Caco-2 (cell line): ENCODE measurements at regions of chr7 and their contacts with region 1.

Region 1: DNA sequence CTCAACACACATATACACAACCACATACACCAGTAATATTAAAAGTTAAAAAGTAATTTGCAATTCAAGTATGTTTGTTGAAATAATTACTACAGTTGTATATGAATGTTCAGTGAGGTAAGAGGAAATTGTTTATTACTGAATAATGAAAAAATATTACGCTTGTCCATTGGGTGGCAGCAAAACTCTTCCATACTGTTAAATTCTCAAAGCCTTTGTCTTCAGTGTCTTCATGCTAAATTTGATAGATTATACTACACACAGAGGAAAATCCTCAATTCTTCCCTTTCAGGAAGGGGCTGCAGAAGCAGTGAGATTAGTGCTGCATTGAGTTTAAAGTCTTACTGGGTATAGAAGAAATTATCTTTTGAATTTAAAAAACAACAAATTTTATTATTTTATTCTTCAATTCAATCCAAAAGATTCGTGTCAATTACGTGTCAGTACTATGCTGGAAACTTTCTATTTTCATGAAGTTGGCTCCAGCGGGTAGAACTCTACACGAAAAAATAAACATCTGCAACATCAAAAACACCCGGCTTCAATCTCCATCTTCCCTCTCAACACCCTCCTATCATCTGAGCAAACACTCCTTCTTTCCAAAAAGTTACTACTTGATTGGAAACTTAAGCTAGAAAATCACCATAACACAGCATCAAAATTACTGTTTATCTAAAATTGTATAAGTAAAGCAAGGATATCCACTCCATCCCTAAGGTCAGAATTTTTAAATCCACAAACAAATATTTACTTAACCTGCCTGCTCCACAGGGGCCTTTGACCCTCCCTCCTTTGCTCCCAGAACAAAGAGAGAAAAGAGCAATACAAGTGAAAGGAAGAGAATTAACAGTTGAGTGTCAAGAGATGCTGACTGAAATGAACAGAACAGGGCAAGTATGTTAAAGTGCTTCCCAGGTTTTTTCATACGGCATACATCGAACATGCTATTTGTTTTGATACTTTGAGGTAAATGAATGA is 37.0 kb upstream of the TES start:
- DNase-seq: peak in 1 of 2 experiments; percentile 63
- H3K4me3 ChIP-seq: no peak overlapping the region
- H3K4me3 Mint-ChIP-seq: peak overlapping the region; percentile 6
- H3K27ac Mint-ChIP-seq: no peak overlapping the region
- H3K4me1 ChIP-seq: peaks cover 43% of the 10 kb centered on the region
- H3K4me1 Mint-ChIP-seq: peaks cover 37% of the 10 kb centered on the region
- H3K27me3 ChIP-seq: no peaks in the 10 kb centered on the region
- H3K27me3 Mint-ChIP-seq: no peaks in the 10 kb centered on the region
- CTCF ChIP-seq: peak; percentile 38 to 63

Region 2: GRCh38 chr7:116075351-116076145 is 97.8 kb before region 1 on chr7:
- CTCF ChIA-PET with region 1: no interaction called
- POLR2A ChIA-PET with region 1: no interaction called
- intact Hi-C with region 1: no loop called
- DNase-seq: no peak
- H3K4me3 ChIP-seq: no peak overlapping the region
- H3K4me3 Mint-ChIP-seq: no peak overlapping the region
- H3K27ac Mint-ChIP-seq: no peak overlapping the region
- H3K4me1 ChIP-seq: no peaks in the 10 kb centered on the region
- H3K4me1 Mint-ChIP-seq: no peaks in the 10 kb centered on the region
- H3K27me3 ChIP-seq: no peaks in the 10 kb centered on the region
- H3K27me3 Mint-ChIP-seq: no peaks in the 10 kb centered on the region
- CTCF ChIP-seq: no peak

Region 3: GRCh38 chr7:116138202-116138801 is 35.0 kb before region 1 on chr7:
- CTCF ChIA-PET with region 1: no interaction called
- POLR2A ChIA-PET with region 1: no interaction called
- intact Hi-C with region 1: loop called (anchors 1 kb)
- DNase-seq: peak; percentile 44 to 69
- H3K4me3 ChIP-seq: no peak overlapping the region
- H3K4me3 Mint-ChIP-seq: no peak overlapping the region
- H3K27ac Mint-ChIP-seq: no peak overlapping the region
- H3K4me1 ChIP-seq: peaks cover 14% of the 10 kb centered on the region; the same call in 1 of the 2 replicates
- H3K4me1 Mint-ChIP-seq: peaks cover 17% of the 10 kb centered on the region
- H3K27me3 ChIP-seq: no peaks in the 10 kb centered on the region
- H3K27me3 Mint-ChIP-seq: no peaks in the 10 kb centered on the region
- CTCF ChIP-seq: peak; percentile 75 to 80

Region 4: DNA sequence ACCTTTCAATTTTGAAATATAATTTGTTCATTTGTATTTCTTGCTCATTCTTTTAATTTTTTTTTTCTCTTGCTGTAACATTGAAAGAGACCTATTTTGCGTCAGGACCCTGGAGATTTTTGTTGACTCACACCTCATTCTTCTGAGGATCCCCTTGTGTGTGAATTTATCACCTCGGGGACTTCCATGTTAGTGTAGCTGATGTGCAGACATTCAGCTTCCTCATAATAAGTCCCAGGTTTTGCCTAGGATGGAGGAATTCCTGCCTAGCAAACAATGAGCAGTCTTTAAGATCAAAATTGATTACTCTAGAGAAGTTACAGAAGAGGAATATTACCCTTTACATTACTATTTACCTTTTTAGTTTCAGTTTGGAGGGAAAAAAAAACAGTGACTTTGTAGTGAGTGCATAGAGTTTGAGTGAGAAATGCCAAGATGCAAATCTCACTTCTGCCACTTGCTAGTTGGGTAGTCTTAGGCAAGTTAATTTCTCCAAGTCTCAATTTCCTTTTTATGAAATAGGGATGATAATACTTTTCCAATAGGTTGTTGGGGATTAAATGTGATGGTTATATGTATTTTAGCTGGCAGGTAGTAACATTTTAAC is 51.3 kb after region 1 on chr7:
- CTCF ChIA-PET with region 1: no interaction called
- POLR2A ChIA-PET with region 1: no interaction called
- intact Hi-C with region 1: no loop called
- DNase-seq: no peak
- H3K4me3 ChIP-seq: no peak overlapping the region
- H3K4me3 Mint-ChIP-seq: no peak overlapping the region
- H3K27ac Mint-ChIP-seq: no peak overlapping the region
- H3K4me1 ChIP-seq: no peaks in the 10 kb centered on the region; the same call in 1 of the 2 replicates
- H3K4me1 Mint-ChIP-seq: peaks cover 9% of the 10 kb centered on the region
- H3K27me3 ChIP-seq: no peaks in the 10 kb centered on the region
- H3K27me3 Mint-ChIP-seq: no peaks in the 10 kb centered on the region
- CTCF ChIP-seq: no peak

Region 5: GRCh38 chr7:116258734-116259133 is 85.4 kb after region 1 on chr7:
- CTCF ChIA-PET with region 1: no interaction called
- POLR2A ChIA-PET with region 1: no interaction called
- intact Hi-C with region 1: loop called (anchors 2 kb)
- DNase-seq: peak in 1 of 2 experiments; percentile 55
- H3K4me3 ChIP-seq: no peak overlapping the region
- H3K4me3 Mint-ChIP-seq: no peak overlapping the region
- H3K27ac Mint-ChIP-seq: no peak overlapping the region
- H3K4me1 ChIP-seq: peaks cover 12% of the 10 kb centered on the region
- H3K4me1 Mint-ChIP-seq: peaks cover 17% of the 10 kb centered on the region
- H3K27me3 ChIP-seq: no peaks in the 10 kb centered on the region
- H3K27me3 Mint-ChIP-seq: no peaks in the 10 kb centered on the region
- CTCF ChIP-seq: peak; percentile 72 to 83

Region 6: DNA sequence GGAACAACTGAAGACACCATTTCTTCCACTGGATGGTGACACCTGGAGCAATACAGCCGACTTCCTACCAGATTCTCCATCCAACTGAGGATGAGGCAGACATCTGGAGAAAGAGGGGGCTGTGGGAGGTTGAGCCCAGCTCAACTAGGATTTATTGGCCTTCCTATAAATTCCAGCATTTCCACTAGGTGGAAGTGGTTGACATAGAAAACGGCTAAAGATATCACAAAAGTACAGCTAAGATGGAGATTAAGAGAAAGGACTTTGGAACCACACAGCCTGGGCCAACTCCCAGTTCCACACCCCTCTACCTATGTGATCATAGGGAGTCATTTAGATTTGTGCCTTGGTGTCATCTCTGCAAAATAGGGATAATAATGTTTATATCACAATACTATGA is 264.9 kb after region 1 on chr7:
- CTCF ChIA-PET with region 1: no interaction called
- POLR2A ChIA-PET with region 1: no interaction called
- intact Hi-C with region 1: loop called (anchors 10 kb)
- DNase-seq: peak; percentile 42 to 47
- H3K4me3 ChIP-seq: no peak overlapping the region
- H3K4me3 Mint-ChIP-seq: no peak overlapping the region
- H3K27ac Mint-ChIP-seq: no peak overlapping the region
- H3K4me1 ChIP-seq: peaks cover 24% of the 10 kb centered on the region
- H3K4me1 Mint-ChIP-seq: peaks cover 4% of the 10 kb centered on the region
- H3K27me3 ChIP-seq: no peaks in the 10 kb centered on the region
- H3K27me3 Mint-ChIP-seq: no peaks in the 10 kb centered on the region
- CTCF ChIP-seq: peak; percentile 19 to 41

Region 7: GRCh38 chr7:116560021-116560970 is 387.0 kb after region 1 on chr7:
- CTCF ChIA-PET with region 1: no interaction called
- POLR2A ChIA-PET with region 1: no interaction called
- intact Hi-C with region 1: no loop called
- DNase-seq: no peak
- H3K4me3 ChIP-seq: no peak overlapping the region
- H3K4me3 Mint-ChIP-seq: no peak overlapping the region
- H3K27ac Mint-ChIP-seq: no peak overlapping the region
- H3K4me1 ChIP-seq: no peaks in the 10 kb centered on the region
- H3K4me1 Mint-ChIP-seq: no peaks in the 10 kb centered on the region
- H3K27me3 ChIP-seq: no peaks in the 10 kb centered on the region
- H3K27me3 Mint-ChIP-seq: peaks cover 7% of the 10 kb centered on the region
- CTCF ChIP-seq: no peak

Region 8: GRCh38 chr7:116588641-116589594 is 415.6 kb after region 1 on chr7:
- CTCF ChIA-PET with region 1: no interaction called
- POLR2A ChIA-PET with region 1: no interaction called
- intact Hi-C with region 1: loop called (anchors 1 kb)
- DNase-seq: peak in 1 of 2 experiments; percentile 57
- H3K4me3 ChIP-seq: no peak overlapping the region
- H3K4me3 Mint-ChIP-seq: no peak overlapping the region
- H3K27ac Mint-ChIP-seq: peak overlapping the region; percentile 30
- H3K4me1 ChIP-seq: peaks cover 17% of the 10 kb centered on the region; the same call in 1 of the 2 replicates
- H3K4me1 Mint-ChIP-seq: peaks cover 22% of the 10 kb centered on the region
- H3K27me3 ChIP-seq: no peaks in the 10 kb centered on the region
- H3K27me3 Mint-ChIP-seq: no peaks in the 10 kb centered on the region
- CTCF ChIP-seq: peak; percentile 44 to 69

Region 9: GRCh38 chr7:117385340-117386109 is 1212.2 kb after region 1 on chr7:
- CTCF ChIA-PET with region 1: no interaction called
- POLR2A ChIA-PET with region 1: no interaction called
- intact Hi-C with region 1: loop called (anchors 10 kb)
- DNase-seq: no peak
- H3K4me3 ChIP-seq: no peak overlapping the region
- H3K4me3 Mint-ChIP-seq: no peak overlapping the region
- H3K27ac Mint-ChIP-seq: no peak overlapping the region
- H3K4me1 ChIP-seq: no peaks in the 10 kb centered on the region
- H3K4me1 Mint-ChIP-seq: no peaks in the 10 kb centered on the region
- H3K27me3 ChIP-seq: no peaks in the 10 kb centered on the region
- H3K27me3 Mint-ChIP-seq: no peaks in the 10 kb centered on the region
- CTCF ChIP-seq: peak; percentile 29 to 45